A549 (cell line): ENCODE measurements at regions of chr2 and their contacts with region 1.

Region 1: DNA sequence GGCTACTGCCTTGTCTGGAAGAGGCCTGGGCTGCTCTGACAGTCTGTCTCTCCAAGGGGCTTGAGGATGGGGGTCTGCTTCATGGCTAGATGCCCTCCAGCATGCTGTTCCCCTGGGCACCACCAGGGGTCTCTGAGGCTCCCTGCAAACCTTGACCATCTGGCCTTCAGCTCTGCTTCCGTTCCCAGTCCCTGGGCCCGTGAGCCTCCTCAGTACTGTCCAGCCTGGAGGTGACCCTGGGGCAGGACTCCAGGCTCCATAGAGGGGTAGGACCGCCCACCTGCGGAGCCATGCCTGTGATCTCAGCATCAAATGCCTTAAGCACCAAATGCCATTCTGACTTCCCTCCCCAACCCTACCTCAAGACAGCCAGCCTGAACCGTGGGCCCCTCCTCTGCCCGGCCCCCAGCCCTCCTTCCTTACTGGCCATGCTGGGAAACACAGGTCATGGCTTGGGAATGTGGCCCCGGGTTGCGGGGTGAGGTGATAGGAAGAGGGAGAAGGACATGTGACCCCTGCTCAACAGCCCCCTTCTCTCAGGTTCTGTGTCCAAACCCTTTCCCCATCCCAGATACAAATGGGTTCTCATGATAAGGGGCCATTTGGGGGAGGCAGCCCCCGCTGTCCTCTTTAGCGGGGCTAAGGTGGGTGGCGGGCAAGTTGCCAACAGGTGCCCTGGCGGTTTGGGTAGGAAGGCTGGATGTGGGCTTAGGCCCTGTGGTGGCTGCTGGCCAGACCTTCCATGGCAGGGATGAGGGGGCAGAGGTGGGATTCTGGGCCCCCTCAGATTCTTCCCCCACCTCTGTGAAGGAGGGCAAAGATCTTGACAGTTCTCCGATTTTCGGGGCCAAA is 25.0 kb downstream of the SPEG start:
- DNase-seq: peak; percentile 59 to 75
- ATAC-seq: peak; percentile 78 to 90
- H3K4me3 ChIP-seq: no peak overlapping the region
- H3K27ac ChIP-seq: peak overlapping the region in 1 of 2 experiments; percentile 44; a peak in 1 of 6 replicates
- H3K4me1 ChIP-seq: 0 out of 3 replicates have a peak, but pooled peaks cover 2% of the 10 kb centered on the region
- CTCF ChIP-seq: peak; percentile 70
- EP300 ChIP-seq: no peak
- POLR2A ChIP-seq: no peak
- RAD21 ChIP-seq: peak; percentile 43 to 61; a peak in 4 of 5 replicates

Region 2: DNA sequence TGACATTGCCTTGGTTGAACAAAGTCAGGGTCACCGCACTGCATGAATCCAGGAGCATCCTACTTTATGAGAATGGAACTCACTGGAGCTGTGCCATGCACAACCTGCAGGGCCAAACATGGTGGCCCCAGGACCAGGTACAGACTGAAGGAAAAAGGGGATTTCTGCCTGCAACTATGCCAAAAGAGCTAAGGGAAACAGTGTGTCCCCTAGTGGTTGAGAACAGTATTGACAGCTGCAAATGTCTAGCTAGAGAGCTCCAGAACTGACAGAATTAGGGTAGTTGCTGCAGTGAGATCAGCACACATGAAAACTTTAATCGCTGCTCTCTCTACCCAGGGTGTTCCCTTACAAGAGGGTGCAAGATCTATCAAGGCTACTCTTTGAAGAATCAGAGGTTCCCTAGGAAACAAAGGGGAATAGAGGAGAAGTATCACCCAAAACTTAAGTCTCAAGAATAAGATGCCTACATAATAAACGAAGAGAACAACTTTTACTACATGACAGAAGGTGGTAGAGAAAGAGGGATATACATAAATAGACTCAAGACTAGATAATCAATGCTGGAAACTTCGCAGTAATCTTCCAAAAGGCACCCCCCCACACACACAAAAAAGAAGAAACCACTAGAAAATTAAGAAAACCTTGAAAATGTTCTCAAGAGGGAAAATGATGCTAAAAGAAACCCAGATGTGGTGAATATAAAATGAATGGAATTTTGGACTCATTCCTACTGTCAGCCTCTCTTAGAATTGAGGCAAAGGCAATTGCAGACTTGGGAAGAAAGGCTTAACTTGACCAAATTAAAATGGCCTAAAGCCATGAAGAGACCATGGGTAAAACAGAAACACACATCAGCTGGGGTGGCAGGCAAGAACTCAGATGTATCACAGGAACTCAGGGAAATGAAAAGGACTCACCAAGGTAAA is 355.3 kb before region 1 on chr2:
- CTCF ChIA-PET with region 1: no interaction called
- POLR2A ChIA-PET with region 1: no interaction called
- DNase-seq: peak; percentile 28 to 60
- ATAC-seq: peak; percentile 88 to 95
- H3K4me3 ChIP-seq: no peak overlapping the region
- H3K27ac ChIP-seq: no peak overlapping the region
- H3K4me1 ChIP-seq: no peaks in the 10 kb centered on the region
- CTCF ChIP-seq: peak; percentile 64
- EP300 ChIP-seq: no peak
- POLR2A ChIP-seq: no peak
- RAD21 ChIP-seq: peak; percentile 41 to 47; a peak in 4 of 5 replicates

Region 3: DNA sequence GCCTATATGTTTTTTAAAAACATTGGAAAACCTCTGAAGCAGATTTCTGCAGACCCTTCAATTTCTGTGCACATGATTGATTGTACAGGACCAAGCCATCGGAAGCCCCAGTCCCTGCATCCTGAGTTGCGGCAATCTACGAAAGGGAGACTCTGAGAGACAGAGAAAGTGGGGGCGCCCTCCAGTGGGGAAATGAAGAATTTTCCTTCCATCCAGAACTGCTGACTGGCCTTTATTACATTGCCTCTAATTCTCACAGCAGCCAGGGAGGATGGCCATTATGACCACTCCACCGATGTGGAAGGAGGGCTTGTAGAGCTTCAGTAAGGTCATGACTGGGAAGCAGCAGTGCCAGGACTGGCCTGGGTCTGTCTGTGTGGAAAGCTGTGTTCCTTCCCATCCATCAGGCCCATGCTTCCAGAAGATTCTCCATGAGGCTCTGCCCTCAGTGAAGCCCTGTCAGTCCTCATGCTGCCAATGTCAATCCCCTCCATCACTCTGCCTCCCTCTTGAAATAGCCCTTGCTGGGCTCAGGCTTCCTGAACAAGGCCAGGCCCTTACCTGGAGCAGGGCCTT is 107.2 kb before region 1 on chr2:
- CTCF ChIA-PET with region 1: no interaction called
- POLR2A ChIA-PET with region 1: no interaction called
- DNase-seq: peak; percentile 62 to 68
- ATAC-seq: peak; percentile 79 to 92
- H3K4me3 ChIP-seq: no peak overlapping the region
- H3K27ac ChIP-seq: no peak overlapping the region
- H3K4me1 ChIP-seq: peaks cover 1% of the 10 kb centered on the region; the same call in 2 of the 3 replicates
- CTCF ChIP-seq: peak; percentile 66
- EP300 ChIP-seq: no peak
- POLR2A ChIP-seq: no peak
- RAD21 ChIP-seq: peak; percentile 58 to 61

Region 4: DNA sequence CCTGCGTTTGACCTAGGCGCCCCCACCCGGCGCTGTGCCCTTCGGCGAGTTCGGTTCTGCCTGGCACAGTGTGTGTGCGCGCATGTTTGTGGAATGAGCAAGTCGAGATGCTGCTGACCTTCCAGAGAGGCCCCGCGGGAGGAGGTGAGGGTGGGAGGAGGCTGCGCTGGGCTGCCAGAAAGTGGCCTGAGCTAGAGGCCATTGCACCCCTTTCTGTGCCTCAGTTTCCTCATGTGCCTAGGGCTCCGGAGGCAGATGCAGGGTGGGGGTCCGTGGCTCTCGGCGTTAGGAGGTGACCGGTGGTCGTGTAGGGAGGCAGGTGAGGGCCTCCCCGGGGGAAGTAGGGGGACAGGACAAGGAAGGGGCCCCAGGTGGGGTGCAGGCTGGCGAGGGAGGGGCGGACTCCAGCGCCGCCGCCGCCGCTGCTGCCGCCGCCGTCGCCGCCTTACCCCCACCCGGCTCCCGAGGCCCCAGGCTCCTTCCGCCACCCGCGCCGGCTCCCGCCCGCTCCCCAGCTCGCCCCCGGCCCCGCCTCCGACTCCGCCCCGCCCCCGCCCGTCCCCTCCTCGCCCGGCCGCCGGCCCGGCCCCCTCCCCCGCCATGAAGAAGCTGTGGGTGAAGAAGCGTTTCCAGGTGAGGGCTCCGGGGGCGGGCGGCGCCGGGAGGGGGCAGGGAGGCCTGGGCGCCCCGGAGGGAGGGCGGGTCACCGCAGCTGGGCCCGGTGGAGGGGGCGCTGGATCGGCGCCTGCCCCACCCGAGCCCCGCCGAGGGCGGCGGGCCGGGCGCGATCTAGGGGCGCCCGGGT is 18.0 kb before region 1 on chr2:
- CTCF ChIA-PET with region 1: interaction called, 20 read pairs
- POLR2A ChIA-PET with region 1: no interaction called
- DNase-seq: peak; percentile 46 to 64
- ATAC-seq: peak; percentile 47 to 66; a peak in 5 of 6 replicates
- H3K4me3 ChIP-seq: peak overlapping the region; percentile 90
- H3K27ac ChIP-seq: peak overlapping the region; percentile 81 to 91
- H3K4me1 ChIP-seq: peaks cover 20% of the 10 kb centered on the region
- CTCF ChIP-seq: no peak
- EP300 ChIP-seq: no peak
- POLR2A ChIP-seq: no peak
- RAD21 ChIP-seq: no peak

Region 5: DNA sequence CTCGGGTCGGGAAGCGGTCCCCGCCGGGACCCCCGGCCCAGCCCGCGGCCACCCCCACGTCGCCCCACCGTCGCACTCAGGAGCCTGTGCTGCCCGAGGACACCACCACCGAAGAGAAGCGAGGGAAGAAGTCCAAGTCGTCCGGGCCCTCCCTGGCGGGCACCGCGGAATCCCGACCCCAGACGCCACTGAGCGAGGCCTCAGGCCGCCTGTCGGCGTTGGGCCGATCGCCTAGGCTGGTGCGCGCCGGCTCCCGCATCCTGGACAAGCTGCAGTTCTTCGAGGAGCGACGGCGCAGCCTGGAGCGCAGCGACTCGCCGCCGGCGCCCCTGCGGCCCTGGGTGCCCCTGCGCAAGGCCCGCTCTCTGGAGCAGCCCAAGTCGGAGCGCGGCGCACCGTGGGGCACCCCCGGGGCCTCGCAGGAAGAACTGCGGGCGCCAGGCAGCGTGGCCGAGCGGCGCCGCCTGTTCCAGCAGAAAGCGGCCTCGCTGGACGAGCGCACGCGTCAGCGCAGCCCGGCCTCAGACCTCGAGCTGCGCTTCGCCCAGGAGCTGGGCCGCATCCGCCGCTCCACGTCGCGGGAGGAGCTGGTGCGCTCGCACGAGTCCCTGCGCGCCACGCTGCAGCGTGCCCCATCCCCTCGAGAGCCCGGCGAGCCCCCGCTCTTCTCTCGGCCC is 11.4 kb before region 1 on chr2:
- CTCF ChIA-PET with region 1: interaction called, 12 read pairs
- POLR2A ChIA-PET with region 1: no interaction called
- DNase-seq: no peak
- ATAC-seq: no peak
- H3K4me3 ChIP-seq: no peak overlapping the region
- H3K27ac ChIP-seq: no peak overlapping the region
- H3K4me1 ChIP-seq: peaks cover 20% of the 10 kb centered on the region
- CTCF ChIP-seq: no peak
- EP300 ChIP-seq: no peak
- POLR2A ChIP-seq: no peak
- RAD21 ChIP-seq: no peak